B cell (primary cell): ENCODE measurements at regions of chr4 and their contacts with region 1.

Region 1: DNA sequence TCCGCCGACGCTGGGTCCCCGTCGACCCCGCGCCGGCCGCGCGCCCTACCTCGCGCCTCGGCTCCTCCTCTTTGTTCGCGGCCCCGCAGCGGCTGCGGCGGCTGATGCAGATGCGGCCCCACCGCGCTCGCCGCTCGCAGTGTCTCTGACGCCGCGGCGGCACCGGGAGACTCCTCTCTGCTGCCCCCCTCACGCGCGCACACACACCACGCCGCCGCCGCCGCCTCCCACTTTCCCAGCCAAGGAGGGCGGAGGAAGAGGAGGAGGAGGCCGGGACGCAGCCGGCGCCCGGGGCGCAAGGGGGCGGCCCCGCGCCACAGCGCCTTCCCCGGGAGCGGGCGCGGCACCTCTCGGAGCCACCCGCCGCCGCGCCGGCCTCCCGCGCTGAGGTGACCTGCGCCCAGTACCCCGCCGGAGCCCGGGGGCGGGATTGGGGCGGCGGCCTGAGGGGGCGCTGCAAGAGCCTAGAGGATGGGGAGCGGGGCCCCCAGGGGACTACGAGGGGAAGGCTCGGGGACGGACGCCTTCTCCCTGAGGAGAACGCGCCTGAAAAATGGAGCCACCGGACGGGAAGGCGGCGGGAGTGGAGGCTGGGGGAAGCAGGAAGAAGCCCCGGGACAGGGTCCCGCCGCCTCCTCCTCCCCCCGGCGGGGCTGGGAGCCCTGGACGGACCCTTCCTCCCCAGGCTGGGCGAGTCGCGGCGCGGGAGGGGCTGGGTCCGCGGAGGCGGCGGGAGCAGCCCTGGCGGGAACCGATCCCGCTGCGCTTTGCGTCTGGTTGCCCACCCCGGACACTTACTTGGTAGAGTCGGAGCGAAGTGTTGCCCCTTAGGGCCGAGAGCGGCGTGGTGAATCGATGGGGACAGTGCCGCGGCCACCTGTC is at the start of gene SH3RF1:
- DNase-seq: peak; percentile 74
- ATAC-seq: peak; percentile 61
- H3K4me3 ChIP-seq: peak within 1 kb of the TSS; percentile 65 to 90 (median 77)
- H3K4me3 Mint-ChIP-seq: peak within 1 kb of the TSS; percentile 94
- H3K27ac ChIP-seq: peak within 1 kb of the TSS in 1 of 2 donors; percentile 16
- H3K27ac Mint-ChIP-seq: peak within 1 kb of the TSS; percentile 81
- H3K4me1 ChIP-seq: peaks cover 23 to 27% of the 10 kb centered on the region in 2 donors
- H3K4me1 Mint-ChIP-seq: peaks cover 28% of the 10 kb centered on the region
- H3K27me3 ChIP-seq: peaks cover 0 to 7% (median 0%) of the 10 kb centered on the region in 4 experiments
- H3K27me3 Mint-ChIP-seq: no peaks in the 10 kb centered on the region
- CTCF ChIP-seq: peak; percentile 37
- total RNA-seq, gene SH3RF1: 5.4 and 6.5 TPM in 2 replicates

Region 2: GRCh38 chr4:169210504-169211118 is 60.4 kb before region 1 on chr4:
- CTCF ChIA-PET with region 1: no interaction called
- POLR2A ChIA-PET with region 1: no interaction called
- intact Hi-C with region 1: loop called (anchors 1 kb)
- DNase-seq: peak; percentile 81
- ATAC-seq: peak; percentile 85
- H3K4me3 ChIP-seq: peak overlapping the region in 2 of 5 experiments; percentile 18 to 36
- H3K4me3 Mint-ChIP-seq: peak overlapping the region; percentile 83
- H3K27ac ChIP-seq: peak overlapping the region; percentile 74 to 76
- H3K27ac Mint-ChIP-seq: peak overlapping the region; percentile 92
- H3K4me1 ChIP-seq: peaks cover 24 to 29% of the 10 kb centered on the region in 2 donors
- H3K4me1 Mint-ChIP-seq: peaks cover 43% of the 10 kb centered on the region
- H3K27me3 ChIP-seq: no peaks in the 10 kb centered on the region
- H3K27me3 Mint-ChIP-seq: no peaks in the 10 kb centered on the region
- CTCF ChIP-seq: no peak